Astrocyte of the cerebellum (primary cell): ENCODE measurements at regions of chr2 and their contacts with region 1.

Region 1: GRCh38 chr2:176534798-176535466 is 265.7 kb downstream of the MTX2 start:
- DNase-seq: no peak
- H3K4me3 ChIP-seq: no peak overlapping the region
- CTCF ChIP-seq: no peak

Region 2: GRCh38 chr2:176479961-176480360 is 55.0 kb before region 1 on chr2:
- in situ Hi-C with region 1: loop called (anchors 5 kb)
- DNase-seq: no peak
- H3K4me3 ChIP-seq: no peak overlapping the region
- CTCF ChIP-seq: no peak

Region 3: GRCh38 chr2:176595986-176596385 is 61.1 kb after region 1 on chr2:
- in situ Hi-C with region 1: no loop called
- DNase-seq: peak; percentile 36
- H3K4me3 ChIP-seq: no peak overlapping the region
- CTCF ChIP-seq: no peak